Calu3 (cell line): ENCODE measurements at regions of chr12 and their contacts with region 1.

Region 1: DNA sequence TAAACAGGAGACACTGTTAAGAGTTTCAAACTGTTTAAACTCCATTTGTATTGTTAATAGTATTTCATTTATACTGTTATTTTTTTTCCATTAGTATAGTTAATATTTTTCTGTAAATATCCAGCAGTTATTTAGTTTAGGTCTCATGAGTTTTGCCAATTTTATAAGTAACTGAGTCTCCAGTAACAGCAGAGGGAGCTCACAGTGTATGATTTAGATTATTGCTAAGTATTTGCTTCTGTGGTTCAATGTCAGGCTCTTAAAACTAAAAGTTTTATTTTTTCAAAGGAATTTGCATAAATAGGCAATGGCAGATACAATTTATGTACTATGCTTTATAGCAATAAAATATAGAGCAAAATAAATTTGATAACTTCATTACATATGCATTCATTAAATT is 209.7 kb downstream of the ATXN7L3B start:
- DNase-seq: peak; percentile 18
- H3K4me3 Mint-ChIP-seq: no peak overlapping the region
- H3K27ac Mint-ChIP-seq: no peak overlapping the region
- H3K4me1 Mint-ChIP-seq: no peaks in the 10 kb centered on the region
- H3K27me3 Mint-ChIP-seq: no peaks in the 10 kb centered on the region
- CTCF ChIP-seq: no peak

Region 2: GRCh38 chr12:74563927-74564326 is 183.4 kb before region 1 on chr12:
- CTCF ChIA-PET with region 1: no interaction called
- intact Hi-C with region 1: no loop called
- DNase-seq: no peak
- H3K4me3 Mint-ChIP-seq: no peak overlapping the region
- H3K27ac Mint-ChIP-seq: no peak overlapping the region
- H3K4me1 Mint-ChIP-seq: no peaks in the 10 kb centered on the region
- H3K27me3 Mint-ChIP-seq: no peaks in the 10 kb centered on the region
- CTCF ChIP-seq: no peak

Region 3: DNA sequence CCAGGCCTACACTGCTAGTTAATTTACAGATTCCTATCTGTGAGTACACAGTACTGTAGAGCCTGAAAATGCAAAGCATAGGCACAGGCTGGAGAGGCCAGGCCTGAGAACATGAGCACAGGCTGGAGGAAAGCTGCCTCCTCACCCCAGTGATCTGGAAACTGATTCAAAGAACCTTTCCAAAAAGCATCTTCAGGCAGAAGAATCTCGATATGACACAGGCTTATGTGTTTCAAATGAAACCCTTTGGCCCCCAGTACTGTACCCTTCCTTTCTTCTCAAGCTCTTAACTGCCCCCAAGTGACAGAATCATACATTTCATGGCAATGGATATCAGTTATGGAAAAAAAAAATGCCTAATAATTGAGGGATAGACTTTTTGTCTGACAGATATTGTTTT is 340.3 kb after region 1 on chr12:
- CTCF ChIA-PET with region 1: no interaction called
- intact Hi-C with region 1: loop called (anchors 1 kb)
- DNase-seq: peak; percentile 20
- H3K4me3 Mint-ChIP-seq: no peak overlapping the region
- H3K27ac Mint-ChIP-seq: no peak overlapping the region
- H3K4me1 Mint-ChIP-seq: no peaks in the 10 kb centered on the region
- H3K27me3 Mint-ChIP-seq: no peaks in the 10 kb centered on the region
- CTCF ChIP-seq: peak; percentile 30

Region 4: GRCh38 chr12:75289753-75290152 is 542.4 kb after region 1 on chr12:
- CTCF ChIA-PET with region 1: no interaction called
- intact Hi-C with region 1: loop called (anchors 1 kb)
- DNase-seq: no peak
- H3K4me3 Mint-ChIP-seq: no peak overlapping the region
- H3K27ac Mint-ChIP-seq: no peak overlapping the region
- H3K4me1 Mint-ChIP-seq: no peaks in the 10 kb centered on the region
- H3K27me3 Mint-ChIP-seq: no peaks in the 10 kb centered on the region
- CTCF ChIP-seq: no peak